ENCODE measurements at regions of chr2 and their contacts with region 1.

Region 1: GRCh38 chr2:134634054-134634753 is 84.6 kb downstream of the TMEM163 start:
- DNase-seq: no peak
- ATAC-seq: no peak
- H3K4me3 ChIP-seq: no peak overlapping the region
- H3K27ac ChIP-seq: no peak overlapping the region
- H3K4me1 ChIP-seq: no peaks in the 10 kb centered on the region
- H3K27me3 ChIP-seq: peaks cover 0 to 4% (median 0%) of the 10 kb centered on the region in 7 donors
- CTCF ChIP-seq: no peak

Region 2: DNA sequence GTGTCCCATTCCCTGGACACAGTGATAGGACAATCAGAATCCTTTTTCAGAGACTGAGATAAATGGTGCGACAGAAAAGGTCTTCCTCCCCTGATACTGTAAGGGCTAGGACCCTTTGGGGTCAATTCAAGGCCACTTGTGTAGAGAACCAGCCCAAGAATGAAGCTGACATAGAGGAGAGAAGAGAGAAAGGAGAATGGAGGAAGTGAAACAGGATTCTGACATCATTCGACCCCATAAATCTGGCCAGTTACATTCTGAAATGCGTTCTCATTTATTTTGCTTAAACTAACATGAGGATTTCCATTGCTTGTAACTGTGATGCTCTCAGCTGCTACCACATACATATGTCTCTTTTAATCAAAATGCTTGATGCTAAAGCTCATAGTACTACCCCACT is 63.5 kb before region 1 on chr2:
- intact Hi-C with region 1: loop called in 1 of 10 experiments (anchors 1 kb)
- DNase-seq: no peak
- ATAC-seq: peak in 1 of 8 donors; percentile 20
- H3K4me3 ChIP-seq: no peak overlapping the region
- H3K27ac ChIP-seq: no peak overlapping the region
- H3K4me1 ChIP-seq: peaks cover 0 to 5% (median 0%) of the 10 kb centered on the region in 9 donors
- H3K27me3 ChIP-seq: no peaks in the 10 kb centered on the region
- CTCF ChIP-seq: no peak

Region 3: GRCh38 chr2:134581877-134582546 is 52.2 kb before region 1 on chr2:
- intact Hi-C with region 1: no loop called
- DNase-seq: no peak
- ATAC-seq: no peak
- H3K4me3 ChIP-seq: no peak overlapping the region
- H3K27ac ChIP-seq: no peak overlapping the region
- H3K4me1 ChIP-seq: no peaks in the 10 kb centered on the region
- H3K27me3 ChIP-seq: no peaks in the 10 kb centered on the region
- CTCF ChIP-seq: no peak